ENCODE measurements at regions of chr4 and their contacts with region 1.

Region 1: GRCh38 chr4:53490965-53491622 is 100.2 kb downstream of the LNX1 start:
- DNase-seq: peak in 1 of 2 donors; percentile 38
- H3K4me3 ChIP-seq: no peak overlapping the region
- H3K27ac ChIP-seq: no peak overlapping the region
- H3K4me1 ChIP-seq: no peaks in the 10 kb centered on the region
- H3K27me3 ChIP-seq: no peaks in the 10 kb centered on the region
- CTCF ChIP-seq: peak; percentile 48 to 72 (median 69)
- POLR2A ChIP-seq: no peak

Region 2: GRCh38 chr4:53098681-53099121 is 392.4 kb before region 1 on chr4:
- intact Hi-C with region 1: loop called (anchors 5 kb)
- DNase-seq: no peak
- H3K4me3 ChIP-seq: no peak overlapping the region
- H3K27ac ChIP-seq: no peak overlapping the region
- H3K4me1 ChIP-seq: no peaks in the 10 kb centered on the region
- H3K27me3 ChIP-seq: no peaks in the 10 kb centered on the region
- CTCF ChIP-seq: no peak
- POLR2A ChIP-seq: no peak

Region 3: DNA sequence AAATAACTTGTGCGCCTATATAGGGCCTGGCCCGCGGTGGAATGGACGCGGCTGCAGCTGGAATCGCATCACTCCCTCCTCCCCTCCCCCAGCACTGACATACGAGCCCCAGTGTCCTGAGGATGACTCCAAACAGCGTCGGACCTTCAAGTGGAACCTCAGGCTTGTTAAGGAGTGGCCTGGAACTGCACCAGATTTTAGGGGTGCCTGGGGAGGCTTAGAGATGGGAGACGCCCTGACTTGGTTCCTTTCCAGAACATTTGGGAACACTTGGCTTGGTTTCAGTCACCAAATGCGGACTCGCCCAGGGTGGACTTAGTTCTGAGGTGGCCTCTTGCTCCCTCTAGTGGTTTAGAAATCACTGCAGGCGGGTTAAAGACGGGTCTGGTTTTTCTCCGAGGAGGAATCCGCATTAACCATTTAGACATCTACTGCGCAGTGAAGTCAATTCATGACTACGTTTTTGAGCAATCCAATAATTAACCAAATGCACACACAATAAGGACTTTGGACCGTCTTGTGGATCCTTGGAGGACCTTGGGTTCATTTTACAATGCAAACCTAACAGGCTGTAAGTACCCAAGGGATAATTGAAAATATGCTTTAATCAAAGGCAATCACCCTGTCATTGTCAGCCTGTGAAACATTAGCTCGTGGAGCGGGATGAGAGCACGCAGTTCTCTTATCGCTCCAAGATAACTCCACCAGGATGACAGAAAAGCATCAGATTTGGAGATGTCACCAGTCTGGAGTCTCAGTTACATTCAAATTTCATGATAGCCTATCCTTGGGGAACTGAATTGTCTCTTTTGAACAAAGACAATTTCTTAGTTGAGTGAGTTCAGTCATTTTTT is 726.8 kb after region 1 on chr4:
- intact Hi-C with region 1: loop called (anchors 10 kb)
- DNase-seq: peak; percentile 67
- H3K4me3 ChIP-seq: peak overlapping the region; percentile 18 to 66 (median 47)
- H3K27ac ChIP-seq: peak overlapping the region; percentile 33 to 35
- H3K4me1 ChIP-seq: no peaks in the 10 kb centered on the region
- H3K27me3 ChIP-seq: no peaks in the 10 kb centered on the region
- CTCF ChIP-seq: peak; percentile 74 to 92 (median 92)
- POLR2A ChIP-seq: no peak

Measured in breast epithelium (tissue), 4 donors.